Esophagus muscularis mucosa (tissue), 4 donors: ENCODE measurements at regions of chr5 and their contacts with region 1.

Region 1: GRCh38 chr5:128538250-128539037 is 399 bp upstream of the FBN2 start:
- DNase-seq: no peak
- H3K4me3 ChIP-seq: peak overlapping the region; percentile 65 to 76 (median 68)
- H3K27ac ChIP-seq: peak overlapping the region; percentile 63 to 85 (median 79)
- H3K4me1 ChIP-seq: peaks cover 13 to 46% (median 38%) of the 10 kb centered on the region in 4 donors
- H3K27me3 ChIP-seq: peaks cover 0 to 30% (median 7%) of the 10 kb centered on the region in 4 donors
- CTCF ChIP-seq: no peak
- EP300 ChIP-seq: no peak
- POLR2A ChIP-seq: no peak

Region 2: DNA sequence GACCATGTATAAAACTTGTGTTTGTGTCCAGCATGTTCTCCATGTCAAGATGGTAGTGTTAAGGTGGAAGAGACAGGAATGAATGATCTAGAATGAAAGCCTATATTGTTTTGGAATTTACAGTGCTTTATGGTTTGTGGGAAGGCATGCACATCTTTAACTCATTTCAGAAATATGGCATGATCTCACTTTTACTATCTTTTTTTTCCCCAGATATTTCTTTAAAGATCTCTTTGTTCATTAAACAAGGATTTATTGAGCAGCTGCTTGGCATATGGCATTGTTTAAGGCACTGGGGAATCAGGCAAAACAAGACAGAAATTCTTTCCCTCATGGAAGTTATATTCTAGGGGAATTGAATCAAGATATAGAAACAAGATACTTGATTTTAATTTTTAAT is 403.2 kb before region 1 on chr5:
- intact Hi-C with region 1: no loop called
- DNase-seq: no peak
- H3K4me3 ChIP-seq: no peak overlapping the region
- H3K27ac ChIP-seq: no peak overlapping the region
- H3K4me1 ChIP-seq: no peaks in the 10 kb centered on the region
- H3K27me3 ChIP-seq: no peaks in the 10 kb centered on the region
- CTCF ChIP-seq: no peak
- EP300 ChIP-seq: no peak
- POLR2A ChIP-seq: no peak

Region 3: GRCh38 chr5:128358826-128359225 is 179.6 kb before region 1 on chr5:
- intact Hi-C with region 1: no loop called
- DNase-seq: no peak
- H3K4me3 ChIP-seq: no peak overlapping the region
- H3K27ac ChIP-seq: no peak overlapping the region
- H3K4me1 ChIP-seq: peaks cover 0 to 3% (median 2%) of the 10 kb centered on the region in 4 donors
- H3K27me3 ChIP-seq: no peaks in the 10 kb centered on the region
- CTCF ChIP-seq: no peak
- EP300 ChIP-seq: no peak
- POLR2A ChIP-seq: no peak

Region 4: GRCh38 chr5:128455841-128456401 is 82.5 kb before region 1 on chr5:
- intact Hi-C with region 1: no loop called
- DNase-seq: no peak
- H3K4me3 ChIP-seq: no peak overlapping the region
- H3K27ac ChIP-seq: no peak overlapping the region
- H3K4me1 ChIP-seq: no peaks in the 10 kb centered on the region
- H3K27me3 ChIP-seq: no peaks in the 10 kb centered on the region
- CTCF ChIP-seq: no peak
- EP300 ChIP-seq: no peak
- POLR2A ChIP-seq: no peak

Region 5: DNA sequence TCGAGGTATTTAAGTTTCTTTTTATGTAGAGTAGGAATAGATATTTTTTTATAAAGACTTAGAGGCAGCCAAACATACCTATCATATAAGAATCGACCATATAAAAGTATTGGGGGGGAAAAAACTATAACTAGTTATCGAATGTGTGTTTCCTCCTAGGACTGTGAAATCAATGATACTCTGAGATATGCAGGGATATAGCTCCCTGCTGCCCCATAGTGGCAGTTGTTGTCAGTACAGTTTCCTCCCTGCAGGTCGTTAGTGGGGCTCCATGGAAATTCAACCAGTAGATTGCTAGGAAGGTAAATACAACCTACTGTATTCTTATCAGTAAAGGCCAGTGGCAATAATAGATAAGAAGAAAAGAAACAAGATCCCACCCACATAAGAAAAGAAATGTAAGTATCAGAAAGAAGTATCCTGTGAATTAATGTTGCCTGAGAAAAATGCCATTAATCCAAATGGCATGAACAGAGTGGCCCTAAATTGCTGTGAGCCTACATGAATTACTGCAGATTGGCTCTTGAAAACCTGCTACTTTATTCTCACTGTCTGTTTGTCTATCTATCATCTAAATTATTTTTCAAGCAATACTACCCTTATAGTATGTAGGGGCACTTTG is 136.5 kb after region 1 on chr5:
- intact Hi-C with region 1: loop called (anchors 5 kb)
- DNase-seq: no peak
- H3K4me3 ChIP-seq: no peak overlapping the region
- H3K27ac ChIP-seq: no peak overlapping the region
- H3K4me1 ChIP-seq: peaks cover 0 to 12% (median 3%) of the 10 kb centered on the region in 4 donors
- H3K27me3 ChIP-seq: no peaks in the 10 kb centered on the region
- CTCF ChIP-seq: peak; percentile 49 to 59 (median 52)
- EP300 ChIP-seq: no peak
- POLR2A ChIP-seq: no peak

Region 6: GRCh38 chr5:128844354-128844923 is 306.0 kb after region 1 on chr5:
- intact Hi-C with region 1: loop called (anchors 10 kb)
- DNase-seq: no peak
- H3K4me3 ChIP-seq: no peak overlapping the region
- H3K27ac ChIP-seq: no peak overlapping the region
- H3K4me1 ChIP-seq: no peaks in the 10 kb centered on the region
- H3K27me3 ChIP-seq: no peaks in the 10 kb centered on the region
- CTCF ChIP-seq: peak; percentile 39 to 47 (median 43)
- EP300 ChIP-seq: no peak
- POLR2A ChIP-seq: no peak

Region 7: DNA sequence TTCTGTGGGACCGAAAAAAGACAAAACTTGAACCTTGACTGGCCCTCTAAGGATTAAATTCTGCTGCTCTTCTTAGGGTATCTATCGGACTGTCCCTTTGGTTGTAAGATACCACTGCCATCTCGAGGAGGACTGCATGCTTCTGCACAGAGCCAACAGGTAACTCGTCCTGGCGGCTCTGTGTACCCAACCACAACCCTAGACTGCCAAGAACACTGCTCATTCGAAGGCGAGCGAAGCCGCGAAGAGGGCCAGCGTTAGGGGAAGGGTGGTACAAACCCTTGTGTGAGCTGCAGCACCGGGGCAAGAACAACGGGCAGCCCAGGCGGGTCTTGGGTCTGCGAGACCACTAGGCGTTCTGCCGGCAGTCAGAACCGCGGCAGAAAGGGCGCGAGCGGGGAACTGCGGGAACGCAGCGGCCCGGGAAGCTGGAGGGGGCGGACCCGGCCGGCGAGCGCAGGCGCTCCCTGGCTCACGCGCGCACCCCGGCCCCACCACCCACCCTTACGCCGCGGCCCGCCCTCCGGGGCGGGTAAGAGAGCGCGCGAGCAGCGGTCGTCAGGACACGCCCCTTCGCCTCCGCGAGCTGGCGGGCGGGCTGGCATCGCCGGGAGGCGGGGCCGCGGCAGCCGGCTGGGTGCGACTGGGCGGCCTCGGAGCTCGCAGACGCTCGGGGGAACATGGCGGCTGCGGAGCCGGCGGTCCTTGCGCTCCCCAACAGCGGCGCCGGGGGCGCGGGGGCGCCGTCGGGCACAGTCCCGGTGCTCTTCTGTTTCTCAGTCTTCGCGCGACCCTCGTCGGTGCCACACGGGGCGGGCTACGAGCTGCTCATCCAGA is 555.9 kb after region 1 on chr5 and contains the start of gene ISOC1:
- intact Hi-C with region 1: loop called (anchors 5 kb)
- DNase-seq: peak; percentile 94
- H3K4me3 ChIP-seq: peak within 1 kb of the TSS; percentile 77 to 83 (median 81)
- H3K27ac ChIP-seq: peak within 1 kb of the TSS; percentile 86 to 94 (median 90)
- H3K4me1 ChIP-seq: peaks cover 22 to 40% (median 36%) of the 10 kb centered on the region in 4 donors
- H3K27me3 ChIP-seq: no peaks in the 10 kb centered on the region
- CTCF ChIP-seq: no peak
- EP300 ChIP-seq: no peak
- POLR2A ChIP-seq: no peak
- total RNA-seq, gene ISOC1: 53.5 to 136 (median 89.5) TPM